ENCODE measurements at regions of chr14 and their contacts with region 1.

Region 1: GRCh38 chr14:77067632-77068514 is 30.2 kb upstream of the CIPC start:
- DNase-seq: peak; percentile 81 to 88 (median 85)
- H3K4me3 ChIP-seq: no peak overlapping the region
- H3K27ac ChIP-seq: no peak overlapping the region
- H3K4me1 ChIP-seq: peaks cover 0 to 10% (median 10%) of the 10 kb centered on the region in 3 donors
- H3K27me3 ChIP-seq: no peaks in the 10 kb centered on the region
- CTCF ChIP-seq: peak; percentile 84

Region 2: DNA sequence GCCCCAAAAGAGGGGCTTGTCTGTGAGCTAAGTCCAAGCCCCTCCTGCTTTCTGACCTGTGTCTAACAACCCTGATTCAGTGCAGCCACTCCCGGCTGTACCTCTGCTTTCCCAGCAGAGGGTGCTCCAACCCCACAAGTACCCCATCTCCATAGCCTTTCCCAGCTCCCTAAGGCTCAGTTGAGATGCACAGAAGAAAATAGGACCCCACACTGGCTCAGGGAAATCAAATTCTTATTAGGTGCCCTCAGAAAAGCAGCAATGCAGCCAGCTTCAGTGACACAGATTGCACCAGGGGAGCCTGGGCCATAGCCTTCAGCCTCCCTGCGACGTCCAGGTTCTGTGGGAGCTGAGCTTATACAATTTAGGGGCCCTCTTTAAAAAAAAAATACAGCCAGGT is 191.8 kb before region 1 on chr14:
- intact Hi-C with region 1: loop called (anchors 10 kb)
- DNase-seq: peak in 4 of 5 donors; percentile 73 to 81 (median 78)
- H3K4me3 ChIP-seq: no peak overlapping the region
- H3K27ac ChIP-seq: no peak overlapping the region
- H3K4me1 ChIP-seq: no peaks in the 10 kb centered on the region
- H3K27me3 ChIP-seq: no peaks in the 10 kb centered on the region
- CTCF ChIP-seq: peak; percentile 94

Region 3: GRCh38 chr14:76910371-76910890 is 157.4 kb before region 1 on chr14:
- intact Hi-C with region 1: loop called (anchors 5 kb)
- DNase-seq: no peak
- H3K4me3 ChIP-seq: no peak overlapping the region
- H3K27ac ChIP-seq: no peak overlapping the region
- H3K4me1 ChIP-seq: peaks cover 0 to 14% (median 8%) of the 10 kb centered on the region in 3 donors
- H3K27me3 ChIP-seq: no peaks in the 10 kb centered on the region
- CTCF ChIP-seq: no peak

Region 4: DNA sequence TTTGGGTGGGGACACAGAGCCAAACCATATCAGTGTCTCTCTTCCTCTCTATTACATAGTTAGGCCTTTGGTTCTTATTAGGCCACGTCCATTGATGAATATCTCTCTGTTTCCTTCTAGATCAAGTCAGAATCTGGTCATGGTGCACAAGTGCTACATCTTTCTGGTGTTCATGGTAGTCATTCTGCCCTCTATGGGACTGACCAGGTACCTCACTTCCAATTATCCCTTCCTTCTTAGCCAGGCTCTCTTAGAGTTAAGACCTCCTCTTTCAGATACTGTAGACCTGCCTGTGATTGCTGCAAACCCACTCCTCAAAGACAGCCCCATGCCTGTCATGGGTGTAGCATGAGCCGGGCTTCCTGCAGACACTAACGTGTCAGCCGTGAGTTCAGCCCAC is 177.9 kb after region 1 on chr14:
- intact Hi-C with region 1: no loop called
- DNase-seq: no peak
- H3K4me3 ChIP-seq: no peak overlapping the region
- H3K27ac ChIP-seq: no peak overlapping the region
- H3K4me1 ChIP-seq: no peaks in the 10 kb centered on the region
- H3K27me3 ChIP-seq: no peaks in the 10 kb centered on the region
- CTCF ChIP-seq: no peak

Region 5: DNA sequence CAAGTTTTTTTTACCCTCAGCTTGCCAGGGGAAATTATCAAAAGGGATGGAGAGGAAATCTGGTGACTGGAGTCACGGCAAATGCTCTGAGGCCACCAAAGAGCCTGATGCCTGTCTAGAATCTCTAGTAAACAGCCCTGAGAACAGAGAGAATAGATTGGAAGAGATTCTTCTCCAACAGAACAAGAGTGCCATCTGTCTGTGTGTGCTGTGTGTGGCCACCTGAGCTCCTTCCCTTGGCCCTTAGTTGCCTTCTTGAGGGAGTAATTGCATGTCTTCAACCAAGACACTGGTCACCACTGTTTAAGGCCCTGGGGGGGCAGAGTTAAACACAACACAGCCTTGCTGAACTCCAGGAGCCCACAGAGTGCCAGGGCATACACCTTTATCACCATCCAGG is 258.3 kb after region 1 on chr14:
- intact Hi-C with region 1: no loop called
- DNase-seq: no peak
- H3K4me3 ChIP-seq: no peak overlapping the region
- H3K27ac ChIP-seq: no peak overlapping the region
- H3K4me1 ChIP-seq: peaks cover 3 to 5% (median 5%) of the 10 kb centered on the region in 3 donors
- H3K27me3 ChIP-seq: no peaks in the 10 kb centered on the region
- CTCF ChIP-seq: no peak